Activated naive CD4-positive, alpha-beta T cell treated with anti-CD3 and anti-CD28 coated beads for 36 hours (primary cell): ENCODE measurements at regions of chr11 and their contacts with region 1.

Region 1: GRCh38 chr11:30346068-30346688 is 23.3 kb downstream of the ARL14EP start:
- DNase-seq: no peak
- H3K4me3 Mint-ChIP-seq: no peak overlapping the region
- H3K27ac Mint-ChIP-seq: no peak overlapping the region
- H3K4me1 Mint-ChIP-seq: peaks cover 11% of the 10 kb centered on the region
- H3K27me3 Mint-ChIP-seq: peaks cover 3% of the 10 kb centered on the region

Region 2: GRCh38 chr11:30855383-30856006 is 509.3 kb after region 1 on chr11:
- CTCF ChIA-PET with region 1: no interaction called
- intact Hi-C with region 1: loop called (anchors 1 kb)
- DNase-seq: no peak
- H3K4me3 Mint-ChIP-seq: no peak overlapping the region
- H3K27ac Mint-ChIP-seq: no peak overlapping the region
- H3K4me1 Mint-ChIP-seq: no peaks in the 10 kb centered on the region
- H3K27me3 Mint-ChIP-seq: no peaks in the 10 kb centered on the region

Region 3: DNA sequence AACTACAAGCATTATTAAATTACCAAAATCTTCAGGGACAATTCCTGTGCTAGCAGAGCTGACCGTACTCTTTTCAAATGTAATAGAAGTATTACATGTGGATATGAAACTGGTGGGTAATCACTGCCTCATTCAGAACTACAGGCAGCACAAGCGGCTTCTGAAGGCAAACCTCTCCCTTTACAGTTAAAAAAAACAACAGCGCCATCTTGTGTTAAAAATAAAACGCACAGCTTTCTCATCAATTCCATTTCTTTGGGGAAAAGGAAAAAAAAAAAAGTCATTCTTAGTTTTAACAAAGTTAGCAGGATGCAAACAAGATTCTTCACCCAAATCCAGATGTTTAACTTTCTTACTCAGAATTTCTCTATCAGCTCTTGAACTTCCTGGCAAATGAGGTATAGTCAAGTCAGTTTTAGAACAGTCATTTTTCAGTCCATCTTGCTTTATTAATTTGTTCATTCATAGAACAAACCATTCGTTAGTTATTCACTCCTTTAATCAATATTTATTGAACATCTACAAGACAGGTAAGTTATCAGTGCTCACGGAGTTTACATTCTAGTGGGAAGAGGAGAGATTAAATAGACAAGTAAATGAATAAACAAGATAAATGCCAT is 571.8 kb after region 1 on chr11:
- CTCF ChIA-PET with region 1: interaction called, 5 read pairs
- intact Hi-C with region 1: loop called (anchors 1 kb)
- DNase-seq: no peak
- H3K4me3 Mint-ChIP-seq: no peak overlapping the region
- H3K27ac Mint-ChIP-seq: no peak overlapping the region
- H3K4me1 Mint-ChIP-seq: no peaks in the 10 kb centered on the region
- H3K27me3 Mint-ChIP-seq: peaks cover 7% of the 10 kb centered on the region

Region 4: DNA sequence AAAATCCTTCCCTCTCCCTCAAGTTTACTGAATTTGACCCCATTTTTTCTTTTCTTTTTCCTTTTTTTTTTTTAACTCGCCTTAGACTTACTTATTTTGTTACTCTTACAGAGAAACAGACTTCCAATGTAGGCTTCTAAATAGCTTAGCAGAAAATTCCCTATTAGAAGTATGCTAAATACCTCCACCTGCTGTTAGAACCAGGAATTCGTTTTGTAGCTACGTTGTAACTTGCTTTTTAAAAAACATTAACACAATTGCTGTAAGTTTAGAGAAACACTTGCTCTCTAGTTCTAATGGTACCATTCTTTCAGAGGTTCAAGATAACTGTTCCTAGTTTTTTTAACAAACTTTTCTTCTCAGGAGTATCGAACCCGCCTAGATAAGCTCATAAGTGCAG is 699.2 kb after region 1 on chr11:
- CTCF ChIA-PET with region 1: no interaction called
- intact Hi-C with region 1: loop called (anchors 10 kb)
- DNase-seq: no peak
- H3K4me3 Mint-ChIP-seq: no peak overlapping the region
- H3K27ac Mint-ChIP-seq: no peak overlapping the region
- H3K4me1 Mint-ChIP-seq: no peaks in the 10 kb centered on the region
- H3K27me3 Mint-ChIP-seq: no peaks in the 10 kb centered on the region